Activated CD4-positive, alpha-beta T cell treated with anti-CD3 and anti-CD28 coated beads for 36 hours (primary cell): ENCODE measurements at regions of chr1 and their contacts with region 1.

Region 1: DNA sequence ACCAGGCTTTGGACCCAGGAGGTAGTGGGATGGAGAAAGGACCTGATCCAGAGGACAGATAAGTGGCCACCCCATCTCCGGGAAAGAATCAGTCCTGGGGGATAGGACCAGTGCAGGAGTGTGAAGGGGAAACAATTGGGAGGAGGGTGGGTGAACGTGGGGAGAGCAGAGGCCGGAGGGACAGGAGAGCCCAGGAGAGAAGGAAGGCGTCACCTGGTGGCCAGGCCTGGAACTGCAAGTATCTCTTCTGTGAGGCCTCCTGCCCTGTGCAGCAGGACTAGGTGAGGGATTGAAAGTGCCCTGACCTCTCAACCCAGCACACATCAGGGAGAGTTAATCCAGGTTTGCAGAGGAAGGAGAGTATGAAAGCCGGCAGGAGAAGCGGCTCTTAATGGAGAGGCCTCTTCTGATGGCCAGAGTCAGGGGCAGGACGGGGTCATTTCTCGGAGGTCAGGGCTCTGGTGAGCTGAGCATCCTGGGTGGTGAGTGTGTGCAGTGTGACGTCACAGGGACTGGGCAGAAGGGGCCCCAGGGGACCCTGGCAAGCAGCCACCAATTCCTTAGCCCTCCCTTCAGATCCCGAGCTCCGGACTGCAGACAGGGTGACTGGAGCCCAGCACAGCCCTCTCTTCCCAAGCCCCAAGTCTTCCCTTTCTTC is 9.2 kb upstream of the LAD1 start:
- DNase-seq: peak; percentile 88
- ATAC-seq: peak; percentile 83
- H3K4me3 Mint-ChIP-seq: no peak overlapping the region
- H3K27ac Mint-ChIP-seq: no peak overlapping the region
- H3K4me1 Mint-ChIP-seq: no peaks in the 10 kb centered on the region
- H3K27me3 Mint-ChIP-seq: peaks cover 2% of the 10 kb centered on the region

Region 2: GRCh38 chr1:201295861-201296260 is 112.4 kb before region 1 on chr1:
- CTCF ChIA-PET with region 1: no interaction called
- POLR2A ChIA-PET with region 1: no interaction called
- intact Hi-C with region 1: no loop called
- DNase-seq: no peak
- ATAC-seq: no peak
- H3K4me3 Mint-ChIP-seq: no peak overlapping the region
- H3K27ac Mint-ChIP-seq: no peak overlapping the region
- H3K4me1 Mint-ChIP-seq: no peaks in the 10 kb centered on the region
- H3K27me3 Mint-ChIP-seq: peaks cover 15% of the 10 kb centered on the region

Region 3: GRCh38 chr1:201385299-201385891 is 22.9 kb before region 1 on chr1:
- CTCF ChIA-PET with region 1: interaction called, 7 read pairs
- POLR2A ChIA-PET with region 1: no interaction called
- intact Hi-C with region 1: loop called in 1 of 2 experiments (anchors 1 kb)
- DNase-seq: peak; percentile 73
- ATAC-seq: peak; percentile 90
- H3K4me3 Mint-ChIP-seq: no peak overlapping the region
- H3K27ac Mint-ChIP-seq: no peak overlapping the region
- H3K4me1 Mint-ChIP-seq: no peaks in the 10 kb centered on the region
- H3K27me3 Mint-ChIP-seq: peaks cover 8% of the 10 kb centered on the region

Region 4: DNA sequence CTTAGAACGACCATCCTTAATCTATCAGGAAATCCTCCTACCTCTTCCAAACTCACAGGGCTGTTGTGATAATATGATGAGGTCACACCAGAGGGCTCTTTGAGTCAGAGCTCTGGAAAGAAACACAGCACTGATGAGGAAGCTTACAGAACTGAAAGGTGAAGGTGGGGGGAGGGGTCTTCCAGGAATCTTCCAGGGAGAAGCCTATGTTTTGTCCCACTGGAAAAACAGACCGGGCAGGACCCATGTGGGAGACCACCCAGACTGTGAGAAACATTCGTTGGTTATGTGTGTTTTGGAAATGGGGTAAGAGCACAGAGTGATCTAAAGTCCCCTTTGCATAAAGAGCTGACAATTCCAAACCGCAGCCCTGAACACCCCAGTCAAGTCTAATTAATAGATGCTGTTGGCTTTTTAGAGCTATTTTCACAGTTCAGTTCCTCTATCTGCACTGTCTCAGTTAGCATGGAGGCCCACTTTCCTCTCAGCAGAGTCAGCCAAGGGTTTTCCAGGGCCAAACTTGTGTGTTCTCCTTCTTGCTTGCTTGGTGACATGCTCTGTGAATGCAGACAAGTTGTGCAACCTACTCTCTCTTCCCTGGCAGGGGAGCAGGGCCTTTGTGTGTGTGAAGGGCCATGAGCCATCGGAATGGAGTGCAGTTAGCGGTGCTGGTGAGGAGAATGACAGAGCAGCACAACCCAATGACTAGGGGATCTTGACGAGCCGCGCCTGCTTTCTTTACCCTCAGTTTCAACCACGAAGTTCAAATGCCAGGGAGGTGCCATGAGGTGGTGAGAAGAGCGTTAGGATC is 48.4 kb after region 1 on chr1:
- CTCF ChIA-PET with region 1: no interaction called
- POLR2A ChIA-PET with region 1: no interaction called
- intact Hi-C with region 1: no loop called
- DNase-seq: no peak
- ATAC-seq: no peak
- H3K4me3 Mint-ChIP-seq: no peak overlapping the region
- H3K27ac Mint-ChIP-seq: no peak overlapping the region
- H3K4me1 Mint-ChIP-seq: peaks cover 17% of the 10 kb centered on the region
- H3K27me3 Mint-ChIP-seq: peaks cover 14% of the 10 kb centered on the region

Region 5: GRCh38 chr1:201559679-201560162 is 151.4 kb after region 1 on chr1:
- CTCF ChIA-PET with region 1: no interaction called
- POLR2A ChIA-PET with region 1: no interaction called
- intact Hi-C with region 1: no loop called
- DNase-seq: peak; percentile 86
- ATAC-seq: peak; percentile 97
- H3K4me3 Mint-ChIP-seq: no peak overlapping the region
- H3K27ac Mint-ChIP-seq: no peak overlapping the region
- H3K4me1 Mint-ChIP-seq: peaks cover 3% of the 10 kb centered on the region
- H3K27me3 Mint-ChIP-seq: no peaks in the 10 kb centered on the region

Region 6: DNA sequence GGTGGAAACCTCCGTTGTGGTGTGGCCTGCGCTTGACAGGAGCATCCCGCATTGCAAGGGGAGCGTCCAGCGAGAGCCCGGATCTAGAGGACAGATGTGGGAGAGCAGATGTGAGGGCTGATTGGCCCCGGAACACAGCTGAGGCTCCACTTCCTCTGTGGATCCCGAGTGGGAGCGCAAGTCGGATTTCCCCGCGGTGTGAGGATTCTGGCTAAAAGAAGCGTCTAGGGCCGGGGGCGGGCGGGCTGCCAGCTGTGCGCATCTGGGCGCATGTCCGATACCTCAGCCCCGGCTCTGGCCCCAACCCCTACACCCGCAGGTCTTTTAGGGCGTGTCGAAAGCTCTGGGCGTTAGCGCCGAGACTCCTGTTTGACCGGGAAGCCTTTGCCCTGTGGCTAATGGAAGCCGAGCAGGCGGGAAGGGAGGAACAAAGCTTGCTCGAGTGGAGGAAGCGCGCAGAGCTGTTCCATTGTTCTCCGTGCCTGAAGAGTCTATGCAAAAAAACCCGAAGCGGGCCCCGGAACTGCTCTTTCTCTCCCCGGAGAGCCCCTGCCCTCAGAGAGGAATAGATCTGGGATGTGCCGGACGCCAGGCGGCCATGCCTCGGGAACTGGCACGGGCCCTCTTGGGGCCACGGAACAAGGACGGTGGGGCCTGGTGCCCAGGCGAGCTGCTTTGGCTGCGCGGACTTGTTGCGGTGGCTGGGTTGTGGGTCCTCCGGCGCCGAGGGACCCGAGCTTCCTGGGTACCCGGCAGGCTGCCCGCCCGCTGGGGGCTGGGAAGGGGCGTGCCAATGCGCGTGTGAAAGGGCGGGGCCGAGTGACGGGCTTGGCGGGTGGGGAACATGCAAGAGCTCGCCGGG is 241.7 kb after region 1 on chr1:
- CTCF ChIA-PET with region 1: no interaction called
- POLR2A ChIA-PET with region 1: no interaction called
- intact Hi-C with region 1: no loop called
- DNase-seq: peak; percentile 13
- ATAC-seq: no peak
- H3K4me3 Mint-ChIP-seq: no peak overlapping the region
- H3K27ac Mint-ChIP-seq: no peak overlapping the region
- H3K4me1 Mint-ChIP-seq: no peaks in the 10 kb centered on the region
- H3K27me3 Mint-ChIP-seq: peaks cover 23% of the 10 kb centered on the region